PC-9 (cell line): ENCODE measurements at regions of chr6 and their contacts with region 1.

Region 1: DNA sequence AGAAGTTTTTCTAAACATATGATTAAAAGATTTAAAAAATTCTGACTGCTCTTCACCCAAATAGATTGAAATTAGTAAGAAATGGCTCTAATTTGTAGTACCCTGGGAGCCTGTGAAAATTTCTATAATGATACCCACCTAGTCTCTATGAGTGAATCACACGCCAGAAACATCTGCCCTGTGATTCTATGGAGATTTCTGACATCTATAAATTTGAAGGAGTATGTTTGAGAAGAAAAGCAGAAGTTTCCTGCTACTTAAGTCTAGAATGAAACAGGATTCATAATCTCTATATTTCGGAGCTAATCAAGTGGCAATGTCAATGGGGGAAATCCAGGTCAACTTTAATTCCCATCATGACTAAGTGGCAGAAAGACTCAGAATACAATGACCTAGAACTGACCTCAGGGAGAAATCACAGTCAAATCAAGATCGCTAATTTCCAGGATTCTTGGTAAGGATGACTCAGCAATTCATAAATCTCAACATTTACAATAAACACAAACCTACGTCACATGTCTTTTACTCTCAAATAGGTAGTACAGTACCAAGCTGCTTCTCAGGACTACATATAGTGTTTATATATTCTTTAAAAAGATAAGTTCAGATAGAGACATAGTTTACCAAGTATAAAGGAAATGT is 186.2 kb upstream of the TNFAIP3 start:
- DNase-seq: peak in 1 of 2 experiments; percentile 77
- H3K4me3 ChIP-seq: no peak overlapping the region
- H3K27ac ChIP-seq: peak overlapping the region; percentile 78
- H3K4me1 ChIP-seq: peaks cover 23% of the 10 kb centered on the region
- H3K27me3 ChIP-seq: no peaks in the 10 kb centered on the region
- CTCF ChIP-seq: no peak

Region 2: DNA sequence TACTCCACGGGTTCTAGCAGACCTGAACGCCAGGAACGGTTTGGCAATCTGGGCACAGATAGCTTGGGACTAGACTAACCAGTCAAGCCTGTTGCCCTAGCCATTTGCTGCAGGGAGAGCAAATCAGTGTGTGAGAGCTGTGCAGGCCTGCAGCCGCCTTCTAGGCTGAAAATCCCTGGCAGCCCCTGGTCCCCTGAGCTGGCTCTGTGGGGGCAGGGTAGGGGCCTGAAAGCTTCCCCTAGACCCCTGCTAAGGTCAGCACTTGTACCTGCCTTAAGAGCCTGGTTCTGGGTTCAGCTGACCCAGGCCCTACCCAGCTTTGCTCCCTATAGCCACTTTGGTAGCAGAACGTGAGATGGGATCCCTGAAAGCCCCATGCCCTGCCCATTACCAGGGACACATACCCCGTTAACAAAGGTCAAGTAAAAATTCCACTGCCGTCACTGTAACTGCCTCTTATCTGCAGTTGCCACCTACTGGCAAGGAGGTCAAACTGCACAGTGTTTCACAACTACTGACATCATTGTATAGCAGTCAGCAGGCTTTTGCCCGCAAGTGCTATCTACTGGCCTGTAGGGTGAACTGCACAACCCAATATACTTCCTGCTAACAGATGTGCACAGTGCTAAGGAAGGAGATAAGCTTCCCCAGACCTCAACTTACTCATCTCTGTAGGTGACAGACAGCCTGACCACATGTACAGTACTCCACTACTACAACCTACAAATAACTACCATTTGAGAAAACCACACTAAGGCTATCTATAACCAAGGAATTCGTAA is 91.6 kb before region 1 on chr6:
- CTCF ChIA-PET with region 1: interaction called, 14 read pairs
- POLR2A ChIA-PET with region 1: no interaction called
- intact Hi-C with region 1: no loop called
- DNase-seq: peak; percentile 50 to 92
- H3K4me3 ChIP-seq: peak overlapping the region; percentile 27; the same call in 1 of the 2 replicates
- H3K27ac ChIP-seq: peak overlapping the region; percentile 22; the same call in 1 of the 2 replicates
- H3K4me1 ChIP-seq: peaks cover 14% of the 10 kb centered on the region
- H3K27me3 ChIP-seq: no peaks in the 10 kb centered on the region
- CTCF ChIP-seq: peak; percentile 96

Region 3: DNA sequence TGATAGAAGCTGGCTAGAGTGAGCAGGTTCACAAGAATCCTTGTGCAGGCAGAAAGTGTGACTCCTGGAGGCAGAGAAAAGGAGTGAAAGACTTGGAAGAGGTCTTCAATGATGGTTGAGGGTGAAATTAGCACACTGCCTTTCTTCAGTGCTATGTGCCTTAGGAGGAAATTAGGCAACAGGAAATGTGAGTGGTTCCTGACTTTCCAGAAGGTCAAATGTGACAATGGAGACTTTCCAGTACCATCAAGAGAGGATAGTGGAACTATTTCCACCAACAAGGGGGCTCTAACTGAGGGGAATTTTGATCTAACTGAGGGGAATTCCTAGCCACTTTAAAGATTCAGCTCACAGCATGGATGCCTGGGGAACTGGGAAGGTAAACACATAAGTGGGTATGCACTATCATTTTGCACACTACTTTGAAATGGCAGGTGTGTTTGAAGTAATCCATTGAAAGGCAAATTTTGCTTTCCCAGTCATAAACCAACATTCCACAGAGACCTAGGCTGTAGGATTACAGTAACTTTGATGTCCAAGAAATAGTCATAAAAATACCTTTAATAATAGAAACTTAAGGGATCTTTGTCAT is 336.4 kb after region 1 on chr6:
- CTCF ChIA-PET with region 1: no interaction called
- POLR2A ChIA-PET with region 1: interaction called, 10 read pairs
- intact Hi-C with region 1: no loop called
- DNase-seq: no peak
- H3K4me3 ChIP-seq: no peak overlapping the region
- H3K27ac ChIP-seq: no peak overlapping the region
- H3K4me1 ChIP-seq: no peaks in the 10 kb centered on the region
- H3K27me3 ChIP-seq: no peaks in the 10 kb centered on the region
- CTCF ChIP-seq: no peak